Panc1 (cell line): ENCODE measurements at regions of chr1 and their contacts with region 1.

Region 1: GRCh38 chr1:112325504-112325903 is 70.5 kb upstream of the CTTNBP2NL start:
- DNase-seq: no peak
- ATAC-seq: no peak
- H3K4me3 ChIP-seq: no peak overlapping the region
- H3K27ac ChIP-seq: no peak overlapping the region
- H3K4me1 ChIP-seq: no peaks in the 10 kb centered on the region
- H3K27me3 ChIP-seq: no peaks in the 10 kb centered on the region
- CTCF ChIP-seq: no peak

Region 2: DNA sequence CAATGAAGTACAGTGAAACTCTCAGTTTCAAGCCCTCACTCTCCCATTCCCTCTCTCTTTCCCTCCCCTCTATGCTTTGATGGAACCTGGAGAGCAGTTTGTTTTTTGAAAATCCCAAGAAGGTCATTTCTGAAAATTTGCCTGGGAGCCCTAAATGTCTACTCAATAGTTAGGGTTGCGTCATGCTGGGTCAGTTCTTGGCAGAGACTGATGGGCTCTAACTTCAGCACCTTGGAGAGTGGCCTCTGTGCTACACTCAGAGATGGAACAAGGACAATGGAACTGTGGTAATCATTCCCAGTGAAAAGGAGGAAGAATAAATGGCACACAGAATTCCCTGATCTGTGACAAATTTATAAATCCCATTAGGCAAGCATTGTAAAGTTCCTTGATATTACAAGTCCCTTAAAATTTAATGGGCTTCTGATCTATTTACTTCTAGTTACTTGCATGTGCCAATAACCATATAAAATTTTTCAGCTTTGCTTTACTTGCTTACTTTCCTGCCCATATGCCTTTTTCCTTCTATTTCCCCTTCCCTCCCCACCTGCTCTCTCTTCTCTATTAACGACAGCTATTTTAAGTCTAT is 153.1 kb before region 1 on chr1:
- CTCF ChIA-PET with region 1: interaction called, 10 read pairs
- POLR2A ChIA-PET with region 1: no interaction called
- in situ Hi-C with region 1: no loop called
- intact Hi-C with region 1: no loop called
- DNase-seq: no peak
- ATAC-seq: no peak
- H3K4me3 ChIP-seq: no peak overlapping the region
- H3K27ac ChIP-seq: no peak overlapping the region
- H3K4me1 ChIP-seq: no peaks in the 10 kb centered on the region
- H3K27me3 ChIP-seq: no peaks in the 10 kb centered on the region; the same call in 1 of the 2 replicates
- CTCF ChIP-seq: no peak

Region 3: DNA sequence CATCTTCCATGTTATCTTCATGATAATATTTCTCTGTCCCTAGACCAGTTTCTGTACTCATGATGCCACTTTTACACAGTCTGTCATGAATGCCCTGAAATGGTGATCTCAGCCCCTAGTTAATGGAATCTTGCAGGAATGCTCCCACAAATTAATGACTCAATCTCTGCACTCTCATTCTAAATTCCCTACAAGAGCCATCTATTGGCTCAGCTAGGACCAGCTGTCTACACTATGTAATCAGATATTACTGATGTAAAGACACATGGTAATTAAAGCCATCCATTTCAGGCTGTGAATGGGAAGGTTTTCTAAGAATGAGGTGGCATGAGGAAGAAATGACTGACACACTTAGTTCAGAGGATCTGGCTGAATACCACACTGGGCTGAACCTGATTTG is 136.9 kb before region 1 on chr1:
- CTCF ChIA-PET with region 1: no interaction called
- POLR2A ChIA-PET with region 1: no interaction called
- in situ Hi-C with region 1: no loop called
- intact Hi-C with region 1: no loop called
- DNase-seq: no peak
- ATAC-seq: no peak
- H3K4me3 ChIP-seq: no peak overlapping the region
- H3K27ac ChIP-seq: no peak overlapping the region
- H3K4me1 ChIP-seq: no peaks in the 10 kb centered on the region
- H3K27me3 ChIP-seq: no peaks in the 10 kb centered on the region; the same call in 1 of the 2 replicates
- CTCF ChIP-seq: no peak

Region 4: DNA sequence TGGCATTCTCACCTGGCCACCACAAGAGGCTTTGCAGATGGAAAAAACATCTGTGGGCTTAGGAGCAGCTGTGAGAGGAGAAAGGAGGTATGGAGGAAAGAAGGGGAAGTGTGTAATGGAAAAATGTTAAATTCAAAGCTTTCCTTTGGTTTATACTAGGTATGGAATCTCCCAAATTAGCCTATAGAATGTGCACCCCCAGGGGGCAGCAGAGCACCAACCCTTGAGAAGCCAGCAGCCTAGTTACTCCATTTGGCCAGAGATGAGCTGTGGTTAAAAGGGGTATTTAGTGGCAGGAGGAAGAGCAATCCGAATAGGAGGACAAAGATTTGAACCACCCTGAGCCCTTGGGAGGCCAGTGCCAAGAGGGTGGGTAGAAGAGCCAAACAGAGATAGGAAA is 26.9 kb before region 1 on chr1:
- CTCF ChIA-PET with region 1: no interaction called
- POLR2A ChIA-PET with region 1: no interaction called
- in situ Hi-C with region 1: no loop called
- intact Hi-C with region 1: no loop called
- DNase-seq: peak; percentile 5
- ATAC-seq: no peak
- H3K4me3 ChIP-seq: no peak overlapping the region
- H3K27ac ChIP-seq: no peak overlapping the region
- H3K4me1 ChIP-seq: no peaks in the 10 kb centered on the region
- H3K27me3 ChIP-seq: no peaks in the 10 kb centered on the region; the same call in 1 of the 2 replicates
- CTCF ChIP-seq: peak; percentile 62

Region 5: GRCh38 chr1:112346801-112347350 is 21.4 kb after region 1 on chr1:
- CTCF ChIA-PET with region 1: no interaction called
- POLR2A ChIA-PET with region 1: no interaction called
- in situ Hi-C with region 1: no loop called
- intact Hi-C with region 1: no loop called
- DNase-seq: no peak
- ATAC-seq: no peak
- H3K4me3 ChIP-seq: no peak overlapping the region
- H3K27ac ChIP-seq: no peak overlapping the region
- H3K4me1 ChIP-seq: no peaks in the 10 kb centered on the region
- H3K27me3 ChIP-seq: no peaks in the 10 kb centered on the region
- CTCF ChIP-seq: no peak

Region 6: GRCh38 chr1:112488141-112488540 is 162.6 kb after region 1 on chr1:
- CTCF ChIA-PET with region 1: no interaction called
- POLR2A ChIA-PET with region 1: no interaction called
- in situ Hi-C with region 1: no loop called
- intact Hi-C with region 1: no loop called
- DNase-seq: no peak
- ATAC-seq: no peak
- H3K4me3 ChIP-seq: no peak overlapping the region
- H3K27ac ChIP-seq: no peak overlapping the region
- H3K4me1 ChIP-seq: no peaks in the 10 kb centered on the region
- H3K27me3 ChIP-seq: no peaks in the 10 kb centered on the region
- CTCF ChIP-seq: no peak